Endothelial cell of umbilical vein (primary cell): ENCODE measurements at regions of chr2 and their contacts with region 1.

Region 1: DNA sequence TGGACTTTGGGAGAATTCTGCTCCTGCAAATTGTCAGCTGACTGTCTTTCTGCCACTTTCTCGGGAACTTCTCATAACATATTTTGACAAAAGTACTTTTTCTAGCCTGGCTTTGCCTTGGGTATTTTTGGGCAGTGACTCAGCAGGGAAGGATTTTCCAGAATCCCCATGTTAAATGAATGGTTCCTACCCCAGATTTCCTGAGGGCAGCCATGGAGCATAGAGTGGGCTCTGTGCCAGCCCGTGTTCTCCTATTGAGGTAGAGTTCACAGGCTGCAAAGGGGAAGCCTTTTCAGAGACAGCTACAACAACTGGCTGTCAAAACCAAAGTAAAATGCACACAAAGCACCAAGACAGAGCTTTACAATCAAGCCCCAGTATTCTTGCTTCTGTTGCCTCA is 59.8 kb downstream of the BMP10 start:
- DNase-seq: peak; percentile 91
- H3K4me3 ChIP-seq: peak overlapping the region in 1 of 3 experiments; percentile 25
- H3K27ac ChIP-seq: peak overlapping the region; percentile 62
- H3K4me1 ChIP-seq: peaks cover 23% of the 10 kb centered on the region
- H3K27me3 ChIP-seq: no peaks in the 10 kb centered on the region
- CTCF ChIP-seq: no peak
- POLR2A ChIP-seq: no peak

Region 2: GRCh38 chr2:68774569-68775271 is 36.6 kb before region 1 on chr2:
- CTCF ChIA-PET with region 1: interaction called, 3 read pairs
- POLR2A ChIA-PET with region 1: no interaction called
- dilution Hi-C with region 1: no loop called
- intact Hi-C with region 1: loop called (anchors 2 kb)
- DNase-seq: peak; percentile 77
- H3K4me3 ChIP-seq: peak overlapping the region in 1 of 3 experiments; percentile 12
- H3K27ac ChIP-seq: peak overlapping the region; percentile 53
- H3K4me1 ChIP-seq: peaks cover 19% of the 10 kb centered on the region
- H3K27me3 ChIP-seq: no peaks in the 10 kb centered on the region
- CTCF ChIP-seq: peak in 1 of 2 donors; percentile 22
- POLR2A ChIP-seq: no peak